Activated T-helper 2 cell treated with anti-CD3 and anti-CD28 coated beads, Interferon-gamma antibody, Interleukin-2, Interleukin-4, amounts not matched to agents 10 μg/mL and 5 μg/mL and 100 μg/mL, durations not matched to agents 14 hours and 24 hours and 36 hours (primary cell): ENCODE measurements at regions of chr2 and their contacts with region 1.

Region 1: GRCh38 chr2:95389245-95390119 is 13.0 kb upstream of the FAHD2A start:
- DNase-seq: peak; percentile 49
- H3K4me3 Mint-ChIP-seq: no peak overlapping the region
- H3K27ac Mint-ChIP-seq: no peak overlapping the region
- H3K4me1 Mint-ChIP-seq: peaks cover 2% of the 10 kb centered on the region
- H3K27me3 Mint-ChIP-seq: no peaks in the 10 kb centered on the region

Region 2: DNA sequence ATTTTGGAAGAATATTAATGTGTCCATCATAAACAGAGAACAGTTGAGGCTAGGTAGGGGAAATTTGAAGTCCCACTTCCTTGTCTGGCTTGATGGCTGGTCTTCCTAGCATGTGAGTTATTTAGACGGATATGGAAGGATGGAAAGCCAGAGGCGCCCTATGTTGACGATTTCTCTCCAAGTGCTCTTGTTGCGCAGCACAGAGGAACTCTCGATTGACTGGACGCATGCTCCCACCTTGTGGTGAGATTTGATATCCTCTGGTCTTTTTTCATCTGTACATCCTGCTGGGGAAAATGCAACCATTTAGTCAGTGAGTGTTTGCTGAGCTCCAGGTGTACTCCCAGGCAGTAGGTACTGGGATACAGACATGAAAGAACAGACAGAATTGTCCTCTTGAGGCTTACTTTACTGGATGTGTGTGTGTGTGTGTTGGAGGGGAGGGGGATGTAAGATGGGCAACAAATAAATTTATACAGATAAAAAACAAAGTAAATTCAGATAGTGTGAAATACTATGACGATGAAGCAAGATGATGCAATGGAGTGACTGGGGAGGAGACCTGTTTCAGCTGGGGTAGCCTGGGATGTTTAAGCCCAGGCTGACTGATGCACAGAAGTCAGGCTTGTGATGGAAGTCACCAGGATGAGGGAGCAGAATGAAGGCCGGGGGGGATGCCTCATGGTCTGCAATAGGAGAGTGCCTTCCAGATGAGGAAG is 339.6 kb after region 1 on chr2:
- intact Hi-C with region 1: loop called (anchors 2 kb)
- DNase-seq: peak; percentile 28
- H3K4me3 Mint-ChIP-seq: no peak overlapping the region
- H3K27ac Mint-ChIP-seq: no peak overlapping the region
- H3K4me1 Mint-ChIP-seq: no peaks in the 10 kb centered on the region
- H3K27me3 Mint-ChIP-seq: peaks cover 9% of the 10 kb centered on the region